Lower lobe of right lung (tissue), 2 donors: ENCODE measurements at regions of chr19 and their contacts with region 1.

Region 1: GRCh38 chr19:4807188-4807587 is 15.7 kb downstream of the FEM1A start:
- DNase-seq: peak; percentile 81
- ATAC-seq: peak; percentile 24 to 64
- H3K4me3 ChIP-seq: no peak overlapping the region
- H3K27ac ChIP-seq: peak overlapping the region; percentile 53
- H3K4me1 ChIP-seq: peaks cover 14% of the 10 kb centered on the region
- H3K27me3 ChIP-seq: no peaks in the 10 kb centered on the region
- CTCF ChIP-seq: no peak

Region 2: GRCh38 chr19:4759388-4760284 is 47.6 kb before region 1 on chr19:
- intact Hi-C with region 1: no loop called
- DNase-seq: peak; percentile 96
- ATAC-seq: peak; percentile 97 to 99
- H3K4me3 ChIP-seq: peak overlapping the region; percentile 39
- H3K27ac ChIP-seq: no peak overlapping the region
- H3K4me1 ChIP-seq: peaks cover 6% of the 10 kb centered on the region
- H3K27me3 ChIP-seq: peaks cover 32% of the 10 kb centered on the region
- CTCF ChIP-seq: no peak

Region 3: DNA sequence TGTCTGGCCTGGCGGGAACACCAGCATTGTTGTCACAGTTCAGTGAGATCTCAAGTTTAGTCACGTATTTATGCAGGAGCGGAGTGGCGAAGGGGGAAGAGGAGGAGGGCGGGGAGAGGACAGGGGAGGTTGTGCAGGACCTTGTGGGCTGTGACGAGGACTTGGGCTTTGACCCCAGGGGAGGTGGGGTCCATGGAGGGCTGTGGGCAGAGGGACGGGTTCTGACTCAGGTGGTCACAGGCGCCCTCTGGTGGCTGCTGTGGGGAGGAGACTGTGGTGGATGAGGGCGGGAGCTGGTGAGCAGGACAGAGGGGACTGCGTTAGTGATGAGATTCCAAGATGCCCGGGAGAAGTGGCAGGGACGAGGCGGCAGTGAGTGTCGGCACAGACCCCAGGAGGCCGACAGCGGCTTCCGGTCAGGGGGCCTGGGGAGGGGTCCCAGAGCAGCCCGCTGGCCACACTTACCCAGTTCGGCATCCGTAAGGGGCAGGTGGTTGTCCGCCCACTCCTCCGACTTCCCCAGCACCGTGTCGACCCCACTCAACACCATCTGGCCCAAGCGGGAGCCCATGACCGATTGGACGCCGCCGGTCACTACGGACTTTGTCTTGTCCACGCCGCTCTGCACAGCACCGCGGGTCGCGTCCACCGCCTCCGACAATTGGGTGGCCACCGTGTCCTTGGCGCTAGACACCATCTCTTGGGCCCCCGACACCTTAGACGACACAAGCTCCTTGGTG is 44.5 kb after region 1 on chr19:
- intact Hi-C with region 1: loop called (anchors 5 kb)
- DNase-seq: peak; percentile 74
- ATAC-seq: peak; percentile 85 to 89
- H3K4me3 ChIP-seq: no peak overlapping the region
- H3K27ac ChIP-seq: no peak overlapping the region
- H3K4me1 ChIP-seq: no peaks in the 10 kb centered on the region
- H3K27me3 ChIP-seq: no peaks in the 10 kb centered on the region
- CTCF ChIP-seq: peak; percentile 87

Region 4: GRCh38 chr19:4877753-4878490 is 70.7 kb after region 1 on chr19:
- intact Hi-C with region 1: no loop called
- DNase-seq: no peak
- ATAC-seq: no peak
- H3K4me3 ChIP-seq: no peak overlapping the region
- H3K27ac ChIP-seq: no peak overlapping the region
- H3K4me1 ChIP-seq: no peaks in the 10 kb centered on the region
- H3K27me3 ChIP-seq: peaks cover 11% of the 10 kb centered on the region
- CTCF ChIP-seq: no peak

Region 5: DNA sequence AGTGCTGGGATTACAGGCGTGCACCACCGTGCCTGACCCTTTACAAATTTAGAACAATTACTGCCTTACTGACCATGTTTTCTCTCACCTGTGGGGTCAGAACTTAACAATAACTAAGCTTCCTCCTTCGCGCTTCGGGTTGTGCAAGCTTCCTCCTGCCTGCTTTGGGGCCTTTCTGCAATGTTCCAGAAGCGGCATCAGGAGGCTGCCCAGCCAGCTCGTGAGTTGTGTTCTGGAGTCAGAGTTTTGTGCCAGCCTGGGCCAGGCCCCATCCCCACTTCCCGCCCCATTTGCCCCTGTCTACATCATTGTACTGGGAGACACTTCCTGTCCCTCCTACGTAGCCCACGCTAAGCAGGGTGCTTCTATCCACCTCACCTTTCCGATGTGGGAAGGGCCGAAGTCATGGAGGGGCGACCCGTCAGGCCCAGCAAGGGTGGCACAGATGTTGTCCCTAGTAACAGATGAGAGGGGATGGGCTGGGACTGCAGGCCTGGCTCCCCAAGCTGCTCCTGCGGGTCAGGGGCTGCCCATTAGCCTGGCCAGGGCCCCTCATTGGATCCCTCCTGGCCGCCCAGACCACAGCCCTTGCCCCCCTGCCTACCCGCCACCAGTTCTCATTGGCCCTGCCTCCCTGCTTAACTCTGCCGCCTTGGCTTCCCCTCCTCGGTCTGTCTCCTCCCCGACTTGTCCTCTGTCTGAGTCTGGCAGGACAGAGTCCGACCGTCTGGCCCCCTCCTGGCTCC is 115.5 kb after region 1 on chr19:
- intact Hi-C with region 1: no loop called
- DNase-seq: peak; percentile 67
- ATAC-seq: peak in 1 of 2 donors; percentile 8
- H3K4me3 ChIP-seq: no peak overlapping the region
- H3K27ac ChIP-seq: no peak overlapping the region
- H3K4me1 ChIP-seq: no peaks in the 10 kb centered on the region
- H3K27me3 ChIP-seq: no peaks in the 10 kb centered on the region
- CTCF ChIP-seq: no peak